BJ (cell line): ENCODE measurements at regions of chr14 and their contacts with region 1.

Region 1: DNA sequence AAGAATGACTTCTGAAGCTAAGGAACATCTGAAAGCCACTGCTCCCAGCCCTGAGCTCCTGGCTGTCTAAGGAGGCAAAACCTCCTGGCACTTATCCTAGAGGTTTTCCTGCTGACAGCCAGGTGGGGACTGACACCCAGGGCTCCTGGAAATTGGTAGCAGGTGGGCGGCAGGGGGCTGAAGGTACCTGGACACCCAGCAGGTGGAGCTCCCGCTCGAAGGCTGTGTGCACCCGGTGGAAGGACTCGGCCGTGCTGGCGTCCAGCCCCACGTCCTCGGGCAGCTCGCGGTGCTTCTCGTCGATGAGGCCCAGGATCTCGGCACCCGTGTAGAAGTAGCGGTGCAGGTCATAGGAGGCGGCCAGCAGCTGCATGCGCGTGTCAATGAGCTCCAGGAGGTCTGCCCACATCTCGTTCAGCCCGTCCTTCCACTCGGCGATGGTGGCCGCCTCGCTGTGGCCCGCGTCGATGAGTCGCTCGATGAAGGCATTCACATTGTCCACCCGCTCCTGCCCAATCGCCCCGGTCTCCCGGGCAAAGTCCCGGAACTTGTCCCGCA is 68.2 kb downstream of the PLEKHG3 start:
- DNase-seq: no peak
- H3K4me3 ChIP-seq: no peak overlapping the region
- H3K27me3 ChIP-seq: peaks cover 5% of the 10 kb centered on the region; the same call in 1 of the 2 replicates
- CTCF ChIP-seq: no peak

Region 2: DNA sequence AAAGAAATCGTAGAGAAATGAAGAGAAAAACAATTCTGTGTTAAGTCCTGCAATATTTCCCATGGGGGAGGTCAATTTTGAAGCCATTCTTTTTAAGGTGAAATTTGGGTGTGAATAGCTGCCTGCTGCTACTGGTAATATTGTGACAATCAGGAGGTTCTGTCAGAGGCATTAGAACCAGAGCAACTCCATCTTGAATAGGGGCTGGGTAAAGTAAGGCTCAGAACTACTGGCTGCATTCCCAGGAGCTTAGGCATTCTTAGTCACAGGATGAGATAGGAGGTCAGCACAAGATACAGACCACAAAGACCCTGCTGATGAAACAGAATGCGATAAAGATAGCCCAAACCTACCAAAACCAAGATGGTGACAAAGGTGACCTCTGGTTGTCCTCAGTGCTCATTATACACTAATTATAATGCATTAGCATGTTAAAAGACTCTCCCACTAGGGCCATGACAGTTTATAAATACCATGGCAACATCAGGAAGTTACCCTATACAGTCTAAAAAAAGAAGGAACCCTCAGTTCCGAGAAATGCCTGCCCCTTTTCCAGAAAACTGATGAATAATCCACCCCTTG is 409.1 kb before region 1 on chr14:
- CTCF ChIA-PET with region 1: no interaction called
- POLR2A ChIA-PET with region 1: interaction called, 22 read pairs
- DNase-seq: no peak
- H3K4me3 ChIP-seq: no peak overlapping the region
- H3K27me3 ChIP-seq: no peaks in the 10 kb centered on the region
- CTCF ChIP-seq: no peak

Region 3: GRCh38 chr14:64671591-64671990 is 100.9 kb before region 1 on chr14:
- CTCF ChIA-PET with region 1: interaction called, 17 read pairs
- POLR2A ChIA-PET with region 1: no interaction called
- DNase-seq: no peak
- H3K4me3 ChIP-seq: no peak overlapping the region
- H3K27me3 ChIP-seq: no peaks in the 10 kb centered on the region
- CTCF ChIP-seq: peak; percentile 79